Caco-2 (cell line): ENCODE measurements at regions of chr10 and their contacts with region 1.

Region 1: GRCh38 chr10:34305190-34305589 is 509.9 kb downstream of the PARD3 start:
- DNase-seq: peak; percentile 90 to 92
- H3K4me3 ChIP-seq: no peak overlapping the region
- H3K4me3 Mint-ChIP-seq: no peak overlapping the region
- H3K27ac Mint-ChIP-seq: peak overlapping the region; percentile 48
- H3K4me1 ChIP-seq: no peaks in the 10 kb centered on the region; the same call in 1 of the 2 replicates
- H3K4me1 Mint-ChIP-seq: peaks cover 7% of the 10 kb centered on the region
- H3K27me3 ChIP-seq: no peaks in the 10 kb centered on the region
- H3K27me3 Mint-ChIP-seq: no peaks in the 10 kb centered on the region
- CTCF ChIP-seq: peak; percentile 58 to 84

Region 2: DNA sequence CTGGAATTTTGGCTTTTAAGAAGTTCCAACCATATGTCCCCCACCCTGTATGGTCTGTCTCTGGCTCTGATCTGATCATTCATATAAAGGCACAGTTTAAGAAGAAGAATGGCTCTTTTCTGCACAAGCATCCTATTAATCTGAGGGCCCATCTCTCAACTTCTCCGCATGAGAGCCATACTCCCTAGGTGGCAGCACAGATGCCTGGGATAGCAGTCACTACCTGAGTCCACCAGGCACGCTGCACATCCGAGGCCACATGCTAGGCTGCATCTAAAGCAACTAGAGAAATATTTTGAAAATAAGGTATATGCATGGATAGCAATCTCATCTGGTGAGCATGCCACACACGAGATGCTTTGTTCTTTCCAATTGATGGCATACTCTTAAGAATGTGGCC is 55.6 kb before region 1 on chr10:
- CTCF ChIA-PET with region 1: interaction called, 6 read pairs
- POLR2A ChIA-PET with region 1: no interaction called
- intact Hi-C with region 1: loop called (anchors 1 kb)
- DNase-seq: peak; percentile 62 to 67
- H3K4me3 ChIP-seq: no peak overlapping the region
- H3K4me3 Mint-ChIP-seq: no peak overlapping the region
- H3K27ac Mint-ChIP-seq: no peak overlapping the region
- H3K4me1 ChIP-seq: peaks cover 5% of the 10 kb centered on the region; the same call in 1 of the 2 replicates
- H3K4me1 Mint-ChIP-seq: peaks cover 20% of the 10 kb centered on the region
- H3K27me3 ChIP-seq: no peaks in the 10 kb centered on the region
- H3K27me3 Mint-ChIP-seq: no peaks in the 10 kb centered on the region
- CTCF ChIP-seq: peak; percentile 28 to 75

Region 3: GRCh38 chr10:34346516-34347100 is 41.4 kb after region 1 on chr10:
- CTCF ChIA-PET with region 1: no interaction called
- POLR2A ChIA-PET with region 1: no interaction called
- intact Hi-C with region 1: no loop called
- DNase-seq: no peak
- H3K4me3 ChIP-seq: no peak overlapping the region
- H3K4me3 Mint-ChIP-seq: no peak overlapping the region
- H3K27ac Mint-ChIP-seq: peak overlapping the region; percentile 60
- H3K4me1 ChIP-seq: peaks cover 25% of the 10 kb centered on the region
- H3K4me1 Mint-ChIP-seq: peaks cover 23% of the 10 kb centered on the region
- H3K27me3 ChIP-seq: no peaks in the 10 kb centered on the region
- H3K27me3 Mint-ChIP-seq: no peaks in the 10 kb centered on the region
- CTCF ChIP-seq: no peak

Region 4: GRCh38 chr10:34522546-34522945 is 217.4 kb after region 1 on chr10:
- CTCF ChIA-PET with region 1: no interaction called
- POLR2A ChIA-PET with region 1: no interaction called
- intact Hi-C with region 1: no loop called
- DNase-seq: no peak
- H3K4me3 ChIP-seq: no peak overlapping the region
- H3K4me3 Mint-ChIP-seq: no peak overlapping the region
- H3K27ac Mint-ChIP-seq: no peak overlapping the region
- H3K4me1 ChIP-seq: peaks cover 16% of the 10 kb centered on the region
- H3K4me1 Mint-ChIP-seq: peaks cover 13% of the 10 kb centered on the region
- H3K27me3 ChIP-seq: no peaks in the 10 kb centered on the region
- H3K27me3 Mint-ChIP-seq: no peaks in the 10 kb centered on the region
- CTCF ChIP-seq: peak; percentile 42 to 56